Common myeloid progenitor, CD34-positive (primary cell): ENCODE measurements at regions of chr11 and their contacts with region 1.

Region 1: GRCh38 chr11:4636962-4637661 is at the start of gene OR51D1:
- DNase-seq: peak; percentile 68 to 81 (median 79)
- H3K4me3 ChIP-seq: peak within 1 kb of the TSS in 1 of 7 experiments; percentile 60
- H3K27ac ChIP-seq: no peak within 1 kb of the TSS
- H3K4me1 ChIP-seq: peaks cover 0 to 3% (median 0%) of the 10 kb centered on the region in 4 experiments
- H3K27me3 ChIP-seq: peaks cover 0 to 3% (median 0%) of the 10 kb centered on the region in 5 experiments

Region 2: GRCh38 chr11:3841426-3842350 is 795.4 kb before region 1 on chr11:
- CTCF ChIA-PET with region 1: no interaction called
- POLR2A ChIA-PET with region 1: no interaction called
- DNase-seq: peak; percentile 95 to 99 (median 98)
- H3K4me3 ChIP-seq: peak overlapping the region in 6 of 7 experiments; percentile 40 to 89 (median 57)
- H3K27ac ChIP-seq: peak overlapping the region; percentile 88 to 92
- H3K4me1 ChIP-seq: peaks cover 20 to 44% (median 42%) of the 10 kb centered on the region in 4 experiments
- H3K27me3 ChIP-seq: no peaks in the 10 kb centered on the region

Region 3: GRCh38 chr11:4626207-4627099 is 10.7 kb before region 1 on chr11:
- CTCF ChIA-PET with region 1: interaction called, 15 read pairs
- POLR2A ChIA-PET with region 1: no interaction called
- DNase-seq: peak; percentile 58 to 76 (median 73)
- H3K4me3 ChIP-seq: no peak overlapping the region
- H3K27ac ChIP-seq: no peak overlapping the region
- H3K4me1 ChIP-seq: no peaks in the 10 kb centered on the region
- H3K27me3 ChIP-seq: no peaks in the 10 kb centered on the region

Region 4: DNA sequence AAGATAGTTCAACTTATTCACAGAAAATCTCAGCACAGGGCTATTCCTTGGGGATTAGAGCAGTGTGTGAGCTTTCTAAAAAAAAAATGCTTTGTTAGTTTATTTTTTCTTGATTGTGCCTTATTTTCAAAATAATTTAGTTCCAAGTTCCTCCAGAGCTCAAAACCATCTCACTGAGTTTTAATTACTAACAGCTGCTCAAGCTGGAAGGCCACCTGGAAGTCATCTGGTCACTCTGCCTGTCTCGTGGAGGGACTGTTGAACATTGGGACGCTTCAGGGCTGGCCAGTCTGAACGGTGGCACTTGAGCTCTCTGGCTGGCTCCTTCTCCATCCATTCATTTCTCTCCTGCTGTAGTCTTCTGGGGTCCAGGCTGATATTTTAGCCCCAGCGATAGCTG is 10.7 kb after region 1 on chr11:
- CTCF ChIA-PET with region 1: interaction called, 14 read pairs
- POLR2A ChIA-PET with region 1: no interaction called
- DNase-seq: no peak
- H3K4me3 ChIP-seq: no peak overlapping the region
- H3K27ac ChIP-seq: no peak overlapping the region
- H3K4me1 ChIP-seq: no peaks in the 10 kb centered on the region
- H3K27me3 ChIP-seq: peaks cover 0 to 2% (median 0%) of the 10 kb centered on the region in 5 experiments

Region 5: GRCh38 chr11:4826425-4826824 is 189.3 kb after region 1 on chr11:
- CTCF ChIA-PET with region 1: interaction called, 38 read pairs
- POLR2A ChIA-PET with region 1: no interaction called
- DNase-seq: peak; percentile 16 to 54 (median 33)
- H3K4me3 ChIP-seq: no peak overlapping the region
- H3K27ac ChIP-seq: no peak overlapping the region
- H3K4me1 ChIP-seq: no peaks in the 10 kb centered on the region
- H3K27me3 ChIP-seq: peaks cover 0 to 2% (median 0%) of the 10 kb centered on the region in 5 experiments